ENCODE measurements at regions of chr22 and their contacts with region 1.

Region 1: GRCh38 chr22:37696657-37697537 is at the start of gene TRIOBP:
- DNase-seq: peak; percentile 97 to 98
- H3K4me3 ChIP-seq: no peak within 1 kb of the TSS; the same call in 1 of the 2 replicates
- H3K27ac ChIP-seq: 0 out of 2 replicates have a peak within 1 kb of the TSS, but pooled peaks have one; percentile 1
- H3K4me1 ChIP-seq: peaks cover 17% of the 10 kb centered on the region
- H3K27me3 ChIP-seq: no peaks in the 10 kb centered on the region
- CTCF ChIP-seq: peak; percentile 61; the same call in 1 of the 2 replicates
- total RNA-seq, gene TRIOBP: 170 and 172 TPM in 2 replicates

Region 2: DNA sequence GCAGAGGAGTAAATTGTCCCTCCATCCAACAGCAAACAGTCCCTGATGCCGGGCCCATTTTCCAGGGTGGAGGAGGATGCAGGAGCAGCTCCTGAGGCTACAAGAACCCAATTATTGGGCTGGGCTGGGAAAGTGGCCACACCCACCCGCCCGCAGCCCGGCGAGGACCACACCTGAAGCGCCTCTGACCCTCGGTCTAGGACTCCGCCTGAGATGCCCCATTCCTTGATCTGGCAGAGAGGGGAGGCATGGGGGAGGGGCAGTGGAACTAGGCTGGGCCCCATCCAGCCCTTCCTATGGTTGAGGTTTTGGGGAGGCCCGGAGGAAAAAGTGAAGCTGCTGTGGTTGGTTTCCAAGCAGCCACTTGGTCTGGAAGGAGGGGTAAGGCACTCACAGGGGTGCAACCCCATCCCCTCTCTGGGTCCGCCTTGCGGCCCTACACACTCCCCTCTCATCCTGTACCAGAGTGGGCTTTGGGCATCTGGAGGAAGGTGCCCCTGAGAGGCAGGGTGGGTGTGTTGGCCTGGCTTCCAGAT is 23.9 kb before region 1 on chr22:
- CTCF ChIA-PET with region 1: no interaction called
- POLR2A ChIA-PET with region 1: no interaction called
- intact Hi-C with region 1: no loop called
- DNase-seq: no peak
- H3K4me3 ChIP-seq: no peak overlapping the region
- H3K27ac ChIP-seq: no peak overlapping the region
- H3K4me1 ChIP-seq: peaks cover 43% of the 10 kb centered on the region
- H3K27me3 ChIP-seq: no peaks in the 10 kb centered on the region
- CTCF ChIP-seq: no peak

Region 3: GRCh38 chr22:37734964-37735451 is 38.1 kb after region 1 on chr22:
- CTCF ChIA-PET with region 1: interaction called, 13 read pairs
- POLR2A ChIA-PET with region 1: no interaction called
- intact Hi-C with region 1: no loop called
- DNase-seq: peak; percentile 64 to 68
- H3K4me3 ChIP-seq: no peak overlapping the region
- H3K27ac ChIP-seq: no peak overlapping the region
- H3K4me1 ChIP-seq: no peaks in the 10 kb centered on the region
- H3K27me3 ChIP-seq: no peaks in the 10 kb centered on the region
- CTCF ChIP-seq: peak; percentile 77

Region 4: GRCh38 chr22:37741312-37741795 is 44.5 kb after region 1 on chr22:
- CTCF ChIA-PET with region 1: no interaction called
- POLR2A ChIA-PET with region 1: interaction called, 3 read pairs
- intact Hi-C with region 1: loop called (anchors 2 kb)
- DNase-seq: no peak
- H3K4me3 ChIP-seq: no peak overlapping the region
- H3K27ac ChIP-seq: peak overlapping the region; percentile 57
- H3K4me1 ChIP-seq: peaks cover 43% of the 10 kb centered on the region
- H3K27me3 ChIP-seq: no peaks in the 10 kb centered on the region
- CTCF ChIP-seq: no peak